Endothelial cell of umbilical vein (primary cell): ENCODE measurements at regions of chr15 and their contacts with region 1.

Region 1: DNA sequence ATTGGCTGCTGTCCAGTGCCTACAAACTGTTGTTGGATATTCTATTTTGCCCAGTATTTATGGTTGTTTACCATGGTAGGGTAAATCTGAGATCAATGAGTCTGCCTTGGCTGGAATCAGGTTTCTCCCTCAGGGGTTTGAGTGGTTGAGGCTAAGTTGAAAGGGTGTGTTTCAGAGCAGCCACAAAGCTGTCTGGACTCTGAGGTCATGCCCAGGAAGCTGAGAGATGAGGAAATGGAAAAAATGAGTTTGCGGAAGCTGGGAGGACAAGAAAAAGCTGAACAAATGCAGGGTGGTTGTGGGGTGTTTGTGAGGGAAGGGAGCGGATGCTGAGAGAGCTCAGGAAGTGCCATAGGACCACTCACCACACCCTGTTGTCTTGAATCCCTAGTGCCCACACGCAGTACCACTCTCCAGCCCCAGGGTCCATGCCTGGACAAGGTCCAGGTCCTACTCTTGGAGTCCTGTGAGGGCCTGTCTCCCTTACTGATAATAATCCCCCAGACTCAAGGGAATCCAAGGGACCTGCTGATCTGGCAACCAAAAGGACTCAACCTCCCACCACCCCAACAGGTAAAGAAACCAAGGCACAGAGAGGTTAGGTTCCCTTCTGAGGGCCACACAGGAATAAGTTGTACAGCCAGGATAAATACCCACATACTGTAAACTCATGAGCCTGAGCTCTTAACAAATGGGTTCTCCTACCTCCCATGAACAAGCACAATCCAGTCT is 81.6 kb downstream of the PPCDC start:
- DNase-seq: peak; percentile 97
- H3K4me3 ChIP-seq: no peak overlapping the region
- H3K27ac ChIP-seq: peak overlapping the region; percentile 98
- H3K4me1 ChIP-seq: peaks cover 37% of the 10 kb centered on the region
- H3K27me3 ChIP-seq: no peaks in the 10 kb centered on the region
- CTCF ChIP-seq: no peak
- POLR2A ChIP-seq: peak; percentile 64

Region 2: GRCh38 chr15:75042730-75043508 is 62.1 kb before region 1 on chr15:
- CTCF ChIA-PET with region 1: interaction called, 16 read pairs
- POLR2A ChIA-PET with region 1: interaction called, 3 read pairs
- dilution Hi-C with region 1: no loop called
- intact Hi-C with region 1: loop called (anchors 1 kb)
- DNase-seq: peak; percentile 63
- H3K4me3 ChIP-seq: no peak overlapping the region
- H3K27ac ChIP-seq: peak overlapping the region; percentile 85
- H3K4me1 ChIP-seq: peaks cover 32% of the 10 kb centered on the region
- H3K27me3 ChIP-seq: no peaks in the 10 kb centered on the region
- CTCF ChIP-seq: peak; percentile 49 to 67
- POLR2A ChIP-seq: no peak

Region 3: DNA sequence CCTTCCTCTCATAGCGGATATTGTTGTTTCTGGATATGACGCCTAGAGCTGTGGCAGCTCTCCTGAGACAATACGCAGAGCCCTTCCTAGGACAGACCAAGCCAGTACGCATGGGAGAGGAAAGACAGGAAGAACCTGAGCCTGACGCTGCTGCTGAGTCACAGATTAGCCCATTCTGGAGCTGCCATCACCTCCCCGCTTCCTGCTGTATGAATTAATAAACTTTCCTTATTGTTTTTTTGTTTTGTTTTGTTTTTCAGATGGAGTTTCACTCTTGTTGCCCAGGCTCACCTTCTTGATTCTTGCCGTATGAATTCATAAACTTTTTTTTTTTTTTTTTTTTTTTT is 14.6 kb before region 1 on chr15:
- CTCF ChIA-PET with region 1: interaction called, 7 read pairs
- POLR2A ChIA-PET with region 1: interaction called, 5 read pairs
- dilution Hi-C with region 1: no loop called
- intact Hi-C with region 1: loop called (anchors 1 kb)
- DNase-seq: peak; percentile 93
- H3K4me3 ChIP-seq: no peak overlapping the region
- H3K27ac ChIP-seq: peak overlapping the region; percentile 90
- H3K4me1 ChIP-seq: peaks cover 11% of the 10 kb centered on the region
- H3K27me3 ChIP-seq: no peaks in the 10 kb centered on the region
- CTCF ChIP-seq: no peak
- POLR2A ChIP-seq: peak; percentile 46

Region 4: GRCh38 chr15:75130597-75131268 is 25.8 kb after region 1 on chr15:
- CTCF ChIA-PET with region 1: no interaction called
- POLR2A ChIA-PET with region 1: no interaction called
- dilution Hi-C with region 1: no loop called
- intact Hi-C with region 1: loop called (anchors 2 kb)
- DNase-seq: no peak
- H3K4me3 ChIP-seq: no peak overlapping the region
- H3K27ac ChIP-seq: no peak overlapping the region
- H3K4me1 ChIP-seq: no peaks in the 10 kb centered on the region
- H3K27me3 ChIP-seq: no peaks in the 10 kb centered on the region
- CTCF ChIP-seq: no peak
- POLR2A ChIP-seq: no peak

Region 5: GRCh38 chr15:75171408-75171807 is 66.4 kb after region 1 on chr15:
- CTCF ChIA-PET with region 1: no interaction called
- POLR2A ChIA-PET with region 1: no interaction called
- dilution Hi-C with region 1: no loop called
- intact Hi-C with region 1: loop called (anchors 2 kb)
- DNase-seq: peak; percentile 58
- H3K4me3 ChIP-seq: no peak overlapping the region
- H3K27ac ChIP-seq: no peak overlapping the region
- H3K4me1 ChIP-seq: peaks cover 13% of the 10 kb centered on the region
- H3K27me3 ChIP-seq: no peaks in the 10 kb centered on the region
- CTCF ChIP-seq: no peak
- POLR2A ChIP-seq: no peak

Region 6: GRCh38 chr15:75453703-75454470 is 348.9 kb after region 1 on chr15:
- CTCF ChIA-PET with region 1: no interaction called
- POLR2A ChIA-PET with region 1: no interaction called
- dilution Hi-C with region 1: no loop called
- intact Hi-C with region 1: loop called (anchors 5 kb)
- DNase-seq: peak; percentile 100
- H3K4me3 ChIP-seq: peak overlapping the region; percentile 61 to 93 (median 84)
- H3K27ac ChIP-seq: peak overlapping the region; percentile 78
- H3K4me1 ChIP-seq: peaks cover 29% of the 10 kb centered on the region
- H3K27me3 ChIP-seq: no peaks in the 10 kb centered on the region
- CTCF ChIP-seq: no peak
- POLR2A ChIP-seq: peak; percentile 52